Adrenal gland (tissue), 19 donors: ENCODE measurements at regions of chrX and their contacts with region 1.

Region 1: DNA sequence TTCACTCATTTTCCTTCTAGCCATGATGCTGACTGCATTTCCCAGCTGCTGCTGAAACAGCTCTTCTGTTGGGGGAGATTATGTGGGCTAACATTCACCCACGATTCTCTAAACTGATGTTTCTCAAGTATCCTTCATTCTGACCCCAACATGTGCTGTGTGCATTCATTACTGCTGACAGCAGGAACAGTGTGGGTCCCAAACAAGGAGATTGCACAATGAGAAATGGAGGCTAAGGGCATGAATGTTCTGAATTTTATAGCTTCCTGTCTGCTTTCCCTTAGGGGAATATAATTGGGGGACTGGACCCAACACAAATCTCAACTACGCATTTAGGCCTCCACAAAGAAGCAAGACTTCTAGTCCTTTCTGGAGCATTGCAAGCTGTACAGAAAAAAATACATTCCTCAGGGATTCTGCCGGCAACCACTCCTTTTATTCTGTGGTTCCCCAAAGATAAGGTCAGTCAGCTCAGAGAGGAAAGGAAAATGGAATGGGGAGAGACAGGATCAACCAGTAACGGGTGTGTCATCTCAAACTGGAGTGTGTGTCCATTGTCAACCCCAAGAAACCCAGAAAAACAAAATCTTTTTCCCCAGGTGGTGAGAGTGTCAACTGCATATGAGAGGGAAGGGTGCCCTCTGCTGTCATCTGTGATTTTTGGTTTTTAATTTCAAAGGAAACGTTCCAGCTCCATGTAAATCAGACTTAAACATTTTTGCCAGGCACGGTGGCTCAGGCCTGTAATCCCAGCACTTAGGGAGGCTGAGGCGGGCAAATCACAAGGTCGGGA is 81.5 kb upstream of the EGFL6 start:
- DNase-seq: peak; percentile 31 to 66 (median 47)
- H3K4me3 ChIP-seq: no peak overlapping the region
- H3K27ac ChIP-seq: peak overlapping the region in 4 of 5 donors; percentile 33 to 84 (median 65)
- H3K4me1 ChIP-seq: peaks cover 0 to 12% of the 10 kb centered on the region in 2 donors
- H3K27me3 ChIP-seq: no peaks in the 10 kb centered on the region
- CTCF ChIP-seq: peak; percentile 51 to 89 (median 78)
- POLR2A ChIP-seq: no peak

Region 2: GRCh38 chrX:12974796-12975669 is 512.9 kb before region 1 on chrX and contains the start of gene TMSB4X:
- intact Hi-C with region 1: loop called in 1 of 2 experiments (anchors 5 kb)
- DNase-seq: peak; percentile 80 to 94 (median 85)
- H3K4me3 ChIP-seq: peak within 1 kb of the TSS; percentile 24 to 92 (median 56)
- H3K27ac ChIP-seq: peak within 1 kb of the TSS; percentile 83 to 92 (median 90)
- H3K4me1 ChIP-seq: no peaks in the 10 kb centered on the region
- H3K27me3 ChIP-seq: no peaks in the 10 kb centered on the region
- CTCF ChIP-seq: no peak
- POLR2A ChIP-seq: peak; percentile 98
- total RNA-seq, gene TMSB4X: 1,180 to 9,144 (median 3,490) TPM

Region 3: GRCh38 chrX:13283950-13284914 is 203.7 kb before region 1 on chrX:
- intact Hi-C with region 1: no loop called
- DNase-seq: no peak
- H3K4me3 ChIP-seq: no peak overlapping the region
- H3K27ac ChIP-seq: no peak overlapping the region
- H3K4me1 ChIP-seq: no peaks in the 10 kb centered on the region
- H3K27me3 ChIP-seq: no peaks in the 10 kb centered on the region
- CTCF ChIP-seq: no peak
- POLR2A ChIP-seq: no peak